ENCODE measurements at regions of chr4 and their contacts with region 1.

Region 1: GRCh38 chr4:122930862-122931261 is 8.5 kb upstream of the NUDT6 start:
- DNase-seq: no peak
- H3K4me3 ChIP-seq: no peak overlapping the region
- H3K27ac ChIP-seq: no peak overlapping the region
- H3K4me1 ChIP-seq: no peaks in the 10 kb centered on the region
- H3K27me3 ChIP-seq: no peaks in the 10 kb centered on the region
- CTCF ChIP-seq: peak in 5 of 6 experiments; percentile 46 to 67 (median 59)
- POLR2A ChIP-seq: no peak

Region 2: DNA sequence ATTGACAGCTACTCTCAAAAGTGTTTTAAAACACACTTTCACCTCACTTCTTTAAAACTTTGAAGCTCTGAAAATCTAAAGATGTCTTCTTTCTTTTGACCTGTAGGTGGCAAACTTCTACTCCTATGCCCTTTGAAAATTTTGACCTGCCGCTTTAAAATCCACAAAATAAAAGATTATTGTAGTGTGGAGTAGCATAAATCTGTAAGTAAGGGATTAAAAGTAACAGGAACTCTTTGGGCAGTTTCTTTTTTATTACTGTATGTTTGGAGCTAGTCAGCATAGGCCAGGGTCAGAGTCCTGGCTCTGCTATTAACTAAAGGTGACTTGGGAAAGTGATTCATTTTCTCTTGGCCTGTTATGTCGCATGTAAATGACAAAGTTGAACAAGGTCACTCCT is 172.8 kb before region 1 on chr4:
- intact Hi-C with region 1: loop called (anchors 5 kb)
- DNase-seq: no peak
- H3K4me3 ChIP-seq: no peak overlapping the region
- H3K27ac ChIP-seq: no peak overlapping the region
- H3K4me1 ChIP-seq: no peaks in the 10 kb centered on the region
- H3K27me3 ChIP-seq: no peaks in the 10 kb centered on the region
- CTCF ChIP-seq: peak; percentile 29 to 72 (median 56)
- POLR2A ChIP-seq: no peak

Region 3: DNA sequence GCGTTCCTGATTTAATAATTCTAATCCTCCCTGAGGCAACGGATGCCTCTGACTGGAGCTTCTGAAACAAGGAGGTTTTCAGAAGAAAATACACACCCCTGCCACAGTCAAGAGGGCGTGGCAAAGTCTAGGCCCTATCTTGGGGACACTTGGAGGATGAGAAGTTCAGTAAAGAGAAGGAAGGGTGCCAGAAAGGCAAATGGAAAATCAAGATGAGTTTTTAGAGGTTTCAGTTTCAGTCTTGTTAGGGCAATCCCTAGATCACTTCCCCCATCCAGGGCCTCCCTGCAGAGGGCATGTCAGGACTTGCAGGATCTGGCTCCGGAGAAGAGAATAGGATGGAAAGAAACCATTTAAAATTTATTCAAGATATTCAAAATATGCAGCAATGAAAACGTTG is 132.8 kb before region 1 on chr4:
- intact Hi-C with region 1: no loop called
- DNase-seq: peak; percentile 36 to 65
- H3K4me3 ChIP-seq: no peak overlapping the region
- H3K27ac ChIP-seq: peak overlapping the region; percentile 13 to 66 (median 18)
- H3K4me1 ChIP-seq: peaks cover 4 to 11% of the 10 kb centered on the region in 2 donors
- H3K27me3 ChIP-seq: no peaks in the 10 kb centered on the region
- CTCF ChIP-seq: no peak
- POLR2A ChIP-seq: no peak

Region 4: DNA sequence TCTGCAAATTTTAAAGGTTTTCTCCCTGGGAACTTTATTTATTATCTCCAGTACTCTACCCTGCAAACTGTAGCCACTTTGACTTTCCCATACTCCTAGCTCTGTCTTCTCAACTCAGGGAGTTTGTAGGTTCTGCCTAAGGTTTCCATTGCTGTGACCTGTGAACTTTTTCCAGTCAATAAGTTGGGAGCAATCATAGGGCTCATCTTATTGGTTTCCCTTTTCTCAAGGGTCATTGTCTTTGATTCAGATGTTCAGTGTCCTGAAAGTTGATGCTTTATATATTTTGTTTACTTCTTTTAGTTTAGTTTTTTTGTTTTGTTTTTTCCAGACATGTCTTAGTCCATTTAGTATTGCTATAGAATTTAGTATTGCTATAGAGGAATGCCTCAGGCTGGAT is 76.8 kb after region 1 on chr4:
- intact Hi-C with region 1: no loop called
- DNase-seq: no peak
- H3K4me3 ChIP-seq: no peak overlapping the region
- H3K27ac ChIP-seq: no peak overlapping the region
- H3K4me1 ChIP-seq: peaks cover 9 to 16% of the 10 kb centered on the region in 2 donors
- H3K27me3 ChIP-seq: no peaks in the 10 kb centered on the region
- CTCF ChIP-seq: no peak
- POLR2A ChIP-seq: no peak

Region 5: GRCh38 chr4:123073650-123074049 is 142.8 kb after region 1 on chr4:
- intact Hi-C with region 1: no loop called
- DNase-seq: no peak
- H3K4me3 ChIP-seq: no peak overlapping the region
- H3K27ac ChIP-seq: no peak overlapping the region
- H3K4me1 ChIP-seq: no peaks in the 10 kb centered on the region
- H3K27me3 ChIP-seq: no peaks in the 10 kb centered on the region
- CTCF ChIP-seq: no peak
- POLR2A ChIP-seq: no peak

Measured in thyroid gland (tissue), 4 donors.